ENCODE measurements at regions of chr1 and their contacts with region 1.

Region 1: DNA sequence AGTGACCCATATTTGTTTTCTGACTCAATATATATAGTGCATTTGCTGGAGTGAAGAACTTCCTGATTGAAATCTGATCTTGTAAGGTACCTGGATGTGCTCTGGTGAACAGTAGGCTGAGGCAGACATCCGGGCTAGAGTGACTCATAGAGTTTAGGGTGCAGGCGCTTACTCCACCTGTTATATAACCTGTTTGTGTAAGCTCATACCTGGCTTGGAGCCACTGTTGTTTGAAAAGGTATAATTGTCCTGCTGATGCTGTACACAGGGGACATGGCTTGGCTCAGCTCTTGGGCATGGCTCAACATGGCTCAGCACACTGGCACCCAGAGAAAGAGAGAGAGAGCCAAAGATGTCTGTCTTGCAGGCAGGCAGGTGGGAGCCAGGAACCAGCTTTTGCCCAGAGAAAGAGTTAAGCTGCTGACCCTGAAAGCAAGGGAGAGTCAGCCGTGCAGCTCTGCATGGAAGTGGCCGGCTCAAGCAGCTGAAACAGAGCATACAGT is 43.3 kb downstream of the GJA5 start:
- DNase-seq: peak; percentile 82 to 100
- H3K4me3 ChIP-seq: no peak overlapping the region
- H3K27ac ChIP-seq: peak overlapping the region; percentile 82
- H3K4me1 ChIP-seq: peaks cover 73% of the 10 kb centered on the region
- H3K27me3 ChIP-seq: no peaks in the 10 kb centered on the region
- CTCF ChIP-seq: no peak

Region 2: GRCh38 chr1:147670317-147671041 is 46.6 kb before region 1 on chr1 and contains the start of gene ACP6:
- CTCF ChIA-PET with region 1: no interaction called
- POLR2A ChIA-PET with region 1: interaction called, 7 read pairs
- intact Hi-C with region 1: loop called (anchors 2 kb)
- DNase-seq: peak; percentile 92 to 93
- H3K4me3 ChIP-seq: peak within 1 kb of the TSS; percentile 65
- H3K27ac ChIP-seq: peak within 1 kb of the TSS; percentile 66
- H3K4me1 ChIP-seq: peaks cover 46% of the 10 kb centered on the region
- H3K27me3 ChIP-seq: no peaks in the 10 kb centered on the region
- CTCF ChIP-seq: no peak
- total RNA-seq, gene ACP6: 71.4 and 85.3 TPM in 2 replicates

Region 3: GRCh38 chr1:147700042-147701006 is 16.8 kb before region 1 on chr1:
- CTCF ChIA-PET with region 1: interaction called, 3 read pairs
- POLR2A ChIA-PET with region 1: interaction called, 10 read pairs
- intact Hi-C with region 1: no loop called
- DNase-seq: peak in 1 of 2 experiments; percentile 59
- H3K4me3 ChIP-seq: no peak overlapping the region
- H3K27ac ChIP-seq: no peak overlapping the region
- H3K4me1 ChIP-seq: no peaks in the 10 kb centered on the region
- H3K27me3 ChIP-seq: no peaks in the 10 kb centered on the region
- CTCF ChIP-seq: peak; percentile 84

Region 4: GRCh38 chr1:147757015-147758000 is 40.2 kb after region 1 on chr1:
- CTCF ChIA-PET with region 1: interaction called, 4 read pairs
- POLR2A ChIA-PET with region 1: interaction called, 16 read pairs
- intact Hi-C with region 1: loop called (anchors 1 kb)
- DNase-seq: peak; percentile 85 to 98
- H3K4me3 ChIP-seq: peak overlapping the region; percentile 19; the same call in 1 of the 2 replicates
- H3K27ac ChIP-seq: peak overlapping the region; percentile 92
- H3K4me1 ChIP-seq: peaks cover 75% of the 10 kb centered on the region
- H3K27me3 ChIP-seq: no peaks in the 10 kb centered on the region
- CTCF ChIP-seq: no peak